ENCODE measurements at regions of chr6 and their contacts with region 1.

Region 1: GRCh38 chr6:138012682-138013081 is 94.5 kb downstream of the PERP start:
- DNase-seq: no peak
- H3K4me3 Mint-ChIP-seq: no peak overlapping the region
- H3K27ac Mint-ChIP-seq: no peak overlapping the region
- H3K4me1 Mint-ChIP-seq: no peaks in the 10 kb centered on the region
- H3K27me3 Mint-ChIP-seq: no peaks in the 10 kb centered on the region
- CTCF ChIP-seq: no peak

Region 2: GRCh38 chr6:137937834-137938233 is 74.8 kb before region 1 on chr6:
- CTCF ChIA-PET with region 1: no interaction called
- POLR2A ChIA-PET with region 1: no interaction called
- intact Hi-C with region 1: no loop called
- DNase-seq: no peak
- H3K4me3 Mint-ChIP-seq: no peak overlapping the region
- H3K27ac Mint-ChIP-seq: no peak overlapping the region
- H3K4me1 Mint-ChIP-seq: peaks cover 17% of the 10 kb centered on the region
- H3K27me3 Mint-ChIP-seq: no peaks in the 10 kb centered on the region
- CTCF ChIP-seq: no peak

Region 3: GRCh38 chr6:137989664-137990063 is 23.0 kb before region 1 on chr6:
- CTCF ChIA-PET with region 1: no interaction called
- POLR2A ChIA-PET with region 1: interaction called, 3 read pairs
- intact Hi-C with region 1: loop called (anchors 1 kb)
- DNase-seq: no peak
- H3K4me3 Mint-ChIP-seq: no peak overlapping the region
- H3K27ac Mint-ChIP-seq: no peak overlapping the region
- H3K4me1 Mint-ChIP-seq: no peaks in the 10 kb centered on the region
- H3K27me3 Mint-ChIP-seq: no peaks in the 10 kb centered on the region
- CTCF ChIP-seq: no peak

Region 4: GRCh38 chr6:138001750-138002349 is 10.8 kb before region 1 on chr6:
- CTCF ChIA-PET with region 1: interaction called, 11 read pairs
- POLR2A ChIA-PET with region 1: interaction called, 12 read pairs
- intact Hi-C with region 1: no loop called
- DNase-seq: peak; percentile 65
- H3K4me3 Mint-ChIP-seq: no peak overlapping the region
- H3K27ac Mint-ChIP-seq: no peak overlapping the region
- H3K4me1 Mint-ChIP-seq: peaks cover 10% of the 10 kb centered on the region
- H3K27me3 Mint-ChIP-seq: no peaks in the 10 kb centered on the region
- CTCF ChIP-seq: peak; percentile 83

Region 5: GRCh38 chr6:138025528-138025978 is 12.9 kb after region 1 on chr6:
- CTCF ChIA-PET with region 1: interaction called, 208 read pairs
- POLR2A ChIA-PET with region 1: interaction called, 247 read pairs
- intact Hi-C with region 1: no loop called
- DNase-seq: no peak
- H3K4me3 Mint-ChIP-seq: no peak overlapping the region
- H3K27ac Mint-ChIP-seq: no peak overlapping the region
- H3K4me1 Mint-ChIP-seq: peaks cover 15% of the 10 kb centered on the region
- H3K27me3 Mint-ChIP-seq: no peaks in the 10 kb centered on the region
- CTCF ChIP-seq: no peak

Region 6: GRCh38 chr6:138031850-138032249 is 19.2 kb after region 1 on chr6:
- CTCF ChIA-PET with region 1: interaction called, 208 read pairs
- POLR2A ChIA-PET with region 1: interaction called, 247 read pairs
- intact Hi-C with region 1: no loop called
- DNase-seq: peak; percentile 62
- H3K4me3 Mint-ChIP-seq: peak overlapping the region; percentile 55
- H3K27ac Mint-ChIP-seq: peak overlapping the region; percentile 91
- H3K4me1 Mint-ChIP-seq: peaks cover 62% of the 10 kb centered on the region
- H3K27me3 Mint-ChIP-seq: no peaks in the 10 kb centered on the region
- CTCF ChIP-seq: no peak

Region 7: GRCh38 chr6:138275976-138276375 is 263.3 kb after region 1 on chr6:
- CTCF ChIA-PET with region 1: no interaction called
- POLR2A ChIA-PET with region 1: no interaction called
- intact Hi-C with region 1: no loop called
- DNase-seq: no peak
- H3K4me3 Mint-ChIP-seq: no peak overlapping the region
- H3K27ac Mint-ChIP-seq: no peak overlapping the region
- H3K4me1 Mint-ChIP-seq: no peaks in the 10 kb centered on the region
- H3K27me3 Mint-ChIP-seq: no peaks in the 10 kb centered on the region
- CTCF ChIP-seq: no peak

Measured in MCF 10A (cell line).